K562 (cell line): ENCODE measurements at regions of chr12 and their contacts with region 1.

Region 1: GRCh38 chr12:4276524-4277204 is 3.1 kb downstream of the CCND2 start:
- DNase-seq: peak; percentile 50 to 90 (median 67)
- ATAC-seq: peak; percentile 63
- H3K4me3 ChIP-seq: no peak overlapping the region
- H3K27ac ChIP-seq: peak overlapping the region; percentile 93; the same call in 1 of the 3 replicates
- H3K4me1 ChIP-seq: peaks cover 17 to 29% of the 10 kb centered on the region in 2 experiments; a peak in 4 of 5 replicates
- H3K27me3 ChIP-seq: no peaks in the 10 kb centered on the region
- CTCF ChIP-seq: peak; percentile 77 to 86 (median 78)
- EP300 ChIP-seq: no peak
- POLR2A ChIP-seq: no peak
- RAD21 ChIP-seq: peak; percentile 80 to 84

Region 2: GRCh38 chr12:3885277-3886094 is 391.2 kb before region 1 on chr12:
- CTCF ChIA-PET with region 1: interaction called, 9 read pairs
- POLR2A ChIA-PET with region 1: interaction called, 3 read pairs
- in situ Hi-C with region 1: loop called (anchors 25 kb)
- intact Hi-C with region 1: no loop called
- DNase-seq: peak in 3 of 4 experiments; percentile 6 to 34 (median 7)
- ATAC-seq: no peak
- H3K4me3 ChIP-seq: no peak overlapping the region
- H3K27ac ChIP-seq: no peak overlapping the region
- H3K4me1 ChIP-seq: no peaks in the 10 kb centered on the region
- H3K27me3 ChIP-seq: no peaks in the 10 kb centered on the region; a peak in 1 of 5 replicates
- CTCF ChIP-seq: peak; percentile 44 to 66 (median 61); a peak in 5 of 6 replicates
- EP300 ChIP-seq: no peak
- POLR2A ChIP-seq: no peak
- RAD21 ChIP-seq: peak; percentile 68 to 71

Region 3: DNA sequence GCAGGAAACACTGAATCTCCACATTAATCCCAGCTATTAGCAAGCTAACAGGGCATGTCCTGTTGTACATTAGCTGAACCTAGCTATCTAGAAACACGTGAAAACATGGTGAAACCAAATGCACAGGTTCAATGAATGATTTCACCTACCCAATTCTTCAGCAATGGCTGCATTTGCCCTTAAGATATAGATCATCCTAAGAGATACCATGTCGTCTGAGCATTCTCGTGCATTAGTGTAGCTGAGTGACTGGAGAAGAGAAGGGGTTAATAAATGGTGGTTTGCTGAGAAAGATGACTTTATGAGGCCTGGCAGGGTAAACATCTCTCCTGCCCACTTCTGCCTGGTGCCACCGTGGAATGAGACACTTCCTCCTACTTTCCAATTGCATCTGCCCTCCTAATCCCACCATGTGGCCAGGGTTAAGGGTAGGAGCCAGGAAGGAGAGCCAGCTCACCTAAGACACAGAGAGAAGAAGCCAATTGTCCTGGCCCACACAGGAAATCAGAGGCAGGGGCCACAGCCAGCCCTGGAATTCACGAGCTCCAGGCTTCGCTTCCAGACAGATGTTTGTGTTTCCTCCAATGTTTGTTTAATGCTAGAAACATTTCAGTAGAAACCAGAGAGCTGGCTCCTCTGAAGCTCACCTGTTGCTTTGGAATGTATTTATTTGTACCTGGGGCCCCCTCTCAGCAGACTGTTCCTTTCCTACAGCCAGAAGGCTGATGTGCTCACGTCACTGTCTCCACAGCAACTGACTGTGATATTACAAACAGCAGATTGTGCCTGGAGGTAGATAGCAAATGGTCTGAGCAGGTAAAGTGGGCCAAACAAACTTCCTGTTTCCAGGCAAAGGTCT is 277.5 kb before region 1 on chr12:
- CTCF ChIA-PET with region 1: interaction called, 9 read pairs
- POLR2A ChIA-PET with region 1: interaction called, 3 read pairs
- in situ Hi-C with region 1: no loop called
- intact Hi-C with region 1: loop called (anchors 5 kb)
- DNase-seq: no peak
- ATAC-seq: no peak
- H3K4me3 ChIP-seq: no peak overlapping the region
- H3K27ac ChIP-seq: no peak overlapping the region
- H3K4me1 ChIP-seq: no peaks in the 10 kb centered on the region
- H3K27me3 ChIP-seq: no peaks in the 10 kb centered on the region
- CTCF ChIP-seq: no peak
- EP300 ChIP-seq: no peak
- POLR2A ChIP-seq: no peak
- RAD21 ChIP-seq: no peak

Region 4: DNA sequence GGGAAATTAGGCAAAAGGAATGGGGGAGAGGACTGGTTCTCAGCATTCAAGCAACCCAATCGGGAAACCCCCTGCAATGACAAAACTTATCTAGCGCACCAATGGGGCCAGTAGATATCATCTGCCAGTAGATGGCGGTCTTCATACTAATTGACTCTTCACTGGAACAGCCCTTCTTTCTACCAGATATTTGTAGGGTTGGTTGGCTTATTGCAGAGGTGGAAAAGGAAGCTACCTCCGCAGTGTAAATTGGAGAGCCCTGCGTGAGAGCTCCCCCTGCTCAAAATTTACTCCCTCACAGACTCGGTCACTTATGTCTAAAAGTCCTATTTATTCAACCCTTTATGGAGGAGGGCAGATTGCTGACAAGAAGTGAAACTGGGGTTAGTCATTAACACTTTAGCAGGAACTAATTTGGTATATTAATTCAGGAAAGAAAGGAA is 169.2 kb before region 1 on chr12:
- CTCF ChIA-PET with region 1: interaction called, 5 read pairs
- POLR2A ChIA-PET with region 1: interaction called, 5 read pairs
- in situ Hi-C with region 1: loop called (anchors 5 kb)
- intact Hi-C with region 1: loop called (anchors 2 kb)
- DNase-seq: peak; percentile 57 to 67 (median 62)
- ATAC-seq: peak; percentile 96
- H3K4me3 ChIP-seq: no peak overlapping the region
- H3K27ac ChIP-seq: no peak overlapping the region
- H3K4me1 ChIP-seq: no peaks in the 10 kb centered on the region
- H3K27me3 ChIP-seq: peaks cover 7 to 10% of the 10 kb centered on the region in 2 experiments; a peak in 3 of 5 replicates
- CTCF ChIP-seq: peak; percentile 51 to 67 (median 66)
- EP300 ChIP-seq: no peak
- POLR2A ChIP-seq: no peak
- RAD21 ChIP-seq: peak; percentile 55 to 78

Region 5: GRCh38 chr12:4112734-4113325 is 163.8 kb before region 1 on chr12:
- CTCF ChIA-PET with region 1: interaction called, 5 read pairs
- POLR2A ChIA-PET with region 1: interaction called, 5 read pairs
- in situ Hi-C with region 1: loop called (anchors 5 kb)
- intact Hi-C with region 1: no loop called
- DNase-seq: no peak
- ATAC-seq: no peak
- H3K4me3 ChIP-seq: no peak overlapping the region
- H3K27ac ChIP-seq: no peak overlapping the region
- H3K4me1 ChIP-seq: no peaks in the 10 kb centered on the region; a peak in 1 of 5 replicates
- H3K27me3 ChIP-seq: peaks cover 3 to 35% of the 10 kb centered on the region in 2 experiments; a peak in 2 of 5 replicates
- CTCF ChIP-seq: no peak
- EP300 ChIP-seq: no peak
- POLR2A ChIP-seq: no peak
- RAD21 ChIP-seq: no peak

Region 6: DNA sequence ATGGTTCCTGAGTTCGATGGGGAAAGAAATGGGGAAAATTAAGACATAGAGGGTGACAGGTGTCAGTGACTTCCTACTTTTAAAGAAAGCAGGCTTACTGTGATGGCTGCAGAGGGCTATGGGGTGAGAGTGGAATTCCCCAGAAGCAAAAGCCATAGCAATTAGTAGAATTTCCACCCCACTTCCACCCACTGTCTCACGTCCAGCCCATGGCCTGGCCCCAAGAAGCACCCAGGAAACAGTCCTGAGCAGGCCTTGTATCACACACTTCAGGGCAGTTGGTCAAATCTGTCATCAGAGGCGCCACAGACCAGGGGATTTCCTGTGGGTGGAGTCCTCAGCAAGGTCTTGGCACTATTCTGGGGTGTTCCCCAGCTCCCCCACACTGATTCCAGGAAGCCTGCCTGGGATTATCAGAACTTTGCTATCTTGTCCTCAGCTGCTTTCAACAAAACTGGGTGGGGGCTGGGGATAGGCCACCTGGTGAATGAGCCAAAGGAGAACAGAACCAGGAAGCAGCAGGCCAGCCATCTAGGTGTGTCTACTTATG is 123.2 kb before region 1 on chr12:
- CTCF ChIA-PET with region 1: no interaction called
- POLR2A ChIA-PET with region 1: interaction called, 3 read pairs
- in situ Hi-C with region 1: no loop called
- intact Hi-C with region 1: loop called (anchors 2 kb)
- DNase-seq: peak; percentile 74 to 95 (median 78)
- ATAC-seq: peak; percentile 98
- H3K4me3 ChIP-seq: no peak overlapping the region
- H3K27ac ChIP-seq: peak overlapping the region; percentile 82
- H3K4me1 ChIP-seq: peaks cover 13 to 25% of the 10 kb centered on the region in 2 experiments; a peak in 3 of 5 replicates
- H3K27me3 ChIP-seq: no peaks in the 10 kb centered on the region
- CTCF ChIP-seq: peak in 2 of 3 experiments; percentile 34 to 44; a peak in 5 of 6 replicates
- EP300 ChIP-seq: peak; percentile 96
- POLR2A ChIP-seq: 0 out of 2 replicates have a peak, but pooled peaks have one; percentile 34
- RAD21 ChIP-seq: peak; percentile 52 to 64; a peak in 3 of 4 replicates